CD14-positive monocyte (primary cell): ENCODE measurements at regions of chr11 and their contacts with region 1.

Region 1: DNA sequence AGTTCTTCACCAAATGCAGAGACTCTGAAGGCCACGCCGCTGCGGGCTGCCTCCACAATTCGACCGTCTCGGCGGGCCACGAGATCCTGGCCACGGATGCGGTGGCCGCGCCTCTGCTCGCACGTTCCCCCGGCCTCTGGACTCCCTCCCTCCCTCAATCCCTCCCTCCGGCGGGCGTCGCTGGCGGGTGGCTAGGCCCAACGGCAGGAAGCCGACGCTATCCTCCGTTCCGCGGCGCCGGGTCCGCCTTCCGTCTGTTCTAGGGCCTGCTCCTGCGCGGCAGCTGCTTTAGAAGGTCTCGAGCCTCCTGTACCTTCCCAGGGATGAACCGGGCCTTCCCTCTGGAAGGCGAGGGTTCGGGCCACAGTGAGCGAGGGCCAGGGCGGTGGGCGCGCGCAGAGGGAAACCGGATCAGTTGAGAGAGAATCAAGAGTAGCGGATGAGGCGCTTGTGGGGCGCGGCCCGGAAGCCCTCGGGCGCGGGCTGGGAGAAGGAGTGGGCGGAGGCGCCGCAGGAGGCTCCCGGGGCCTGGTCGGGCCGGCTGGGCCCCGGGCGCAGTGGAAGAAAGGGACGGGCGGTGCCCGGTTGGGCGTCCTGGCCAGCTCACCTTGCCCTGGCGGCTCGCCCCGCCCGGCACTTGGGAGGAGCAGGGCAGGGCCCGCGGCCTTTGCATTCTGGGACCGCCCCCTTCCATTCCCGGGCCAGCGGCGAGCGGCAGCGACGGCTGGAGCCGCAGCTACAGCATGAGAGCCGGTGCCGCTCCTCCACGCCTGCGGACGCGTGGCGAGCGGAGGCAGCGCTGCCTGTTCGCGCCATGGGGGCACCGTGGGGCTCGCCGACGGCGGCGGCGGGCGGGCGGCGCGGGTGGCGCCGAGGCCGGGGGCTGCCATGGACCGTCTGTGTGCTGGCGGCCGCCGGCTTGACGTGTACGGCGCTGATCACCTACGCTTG is at the start of gene FUT4:
- DNase-seq: peak; percentile 72 to 80 (median 77)
- H3K4me3 ChIP-seq: peak within 1 kb of the TSS; percentile 75 to 91 (median 91)
- H3K4me3 Mint-ChIP-seq: peak within 1 kb of the TSS; percentile 99 to 100
- H3K27ac ChIP-seq: peak within 1 kb of the TSS; percentile 96 to 99
- H3K27ac Mint-ChIP-seq: peak within 1 kb of the TSS; percentile 99 to 100 (median 100)
- H3K4me1 ChIP-seq: peaks cover 48 to 49% of the 10 kb centered on the region in 2 donors
- H3K4me1 Mint-ChIP-seq: peaks cover 48% of the 10 kb centered on the region
- H3K27me3 ChIP-seq: no peaks in the 10 kb centered on the region
- H3K27me3 Mint-ChIP-seq: no peaks in the 10 kb centered on the region
- CTCF ChIP-seq: no peak
- polyA plus RNA-seq, gene FUT4: 5.4 to 19.9 (median 6.5) TPM

Region 2: GRCh38 chr11:93986716-93987115 is 557.3 kb before region 1 on chr11:
- intact Hi-C with region 1: no loop called
- DNase-seq: no peak
- H3K4me3 ChIP-seq: no peak overlapping the region
- H3K4me3 Mint-ChIP-seq: no peak overlapping the region
- H3K27ac ChIP-seq: no peak overlapping the region
- H3K27ac Mint-ChIP-seq: no peak overlapping the region
- H3K4me1 ChIP-seq: no peaks in the 10 kb centered on the region
- H3K4me1 Mint-ChIP-seq: no peaks in the 10 kb centered on the region
- H3K27me3 ChIP-seq: no peaks in the 10 kb centered on the region
- H3K27me3 Mint-ChIP-seq: no peaks in the 10 kb centered on the region
- CTCF ChIP-seq: no peak

Region 3: GRCh38 chr11:94504689-94505293 is 39.2 kb before region 1 on chr11:
- intact Hi-C with region 1: no loop called
- DNase-seq: peak; percentile 33 to 58 (median 45)
- H3K4me3 ChIP-seq: no peak overlapping the region
- H3K4me3 Mint-ChIP-seq: no peak overlapping the region
- H3K27ac ChIP-seq: no peak overlapping the region
- H3K27ac Mint-ChIP-seq: no peak overlapping the region
- H3K4me1 ChIP-seq: peaks cover 3 to 8% of the 10 kb centered on the region in 2 donors
- H3K4me1 Mint-ChIP-seq: peaks cover 9% of the 10 kb centered on the region
- H3K27me3 ChIP-seq: no peaks in the 10 kb centered on the region
- H3K27me3 Mint-ChIP-seq: peaks cover 0 to 3% (median 0%) of the 10 kb centered on the region in 3 donors
- CTCF ChIP-seq: peak; percentile 82

Region 4: GRCh38 chr11:94574193-94574961 is 30.4 kb after region 1 on chr11:
- intact Hi-C with region 1: loop called in 1 of 2 experiments (anchors 2 kb)
- DNase-seq: peak; percentile 70 to 81 (median 74)
- H3K4me3 ChIP-seq: peak overlapping the region; percentile 50 to 78 (median 64)
- H3K4me3 Mint-ChIP-seq: peak overlapping the region; percentile 87 to 96
- H3K27ac ChIP-seq: peak overlapping the region; percentile 96 to 98
- H3K27ac Mint-ChIP-seq: peak overlapping the region; percentile 96 to 99 (median 99)
- H3K4me1 ChIP-seq: peaks cover 45 to 51% of the 10 kb centered on the region in 2 donors
- H3K4me1 Mint-ChIP-seq: peaks cover 60% of the 10 kb centered on the region
- H3K27me3 ChIP-seq: no peaks in the 10 kb centered on the region
- H3K27me3 Mint-ChIP-seq: peaks cover 0 to 2% (median 1%) of the 10 kb centered on the region in 3 donors
- CTCF ChIP-seq: no peak

Region 5: GRCh38 chr11:94583866-94584500 is 40.0 kb after region 1 on chr11:
- intact Hi-C with region 1: loop called in 1 of 2 experiments (anchors 5 kb)
- DNase-seq: peak; percentile 90 to 98 (median 95)
- H3K4me3 ChIP-seq: peak overlapping the region in 2 of 3 experiments; percentile 22 to 55
- H3K4me3 Mint-ChIP-seq: peak overlapping the region; percentile 44 to 76
- H3K27ac ChIP-seq: peak overlapping the region; percentile 82 to 97
- H3K27ac Mint-ChIP-seq: peak overlapping the region; percentile 95 to 99 (median 98)
- H3K4me1 ChIP-seq: peaks cover 36 to 44% of the 10 kb centered on the region in 2 donors
- H3K4me1 Mint-ChIP-seq: peaks cover 48% of the 10 kb centered on the region
- H3K27me3 ChIP-seq: no peaks in the 10 kb centered on the region
- H3K27me3 Mint-ChIP-seq: no peaks in the 10 kb centered on the region
- CTCF ChIP-seq: no peak

Region 6: GRCh38 chr11:94602430-94603372 is 58.7 kb after region 1 on chr11:
- intact Hi-C with region 1: loop called in 1 of 2 experiments (anchors 5 kb)
- DNase-seq: peak; percentile 80 to 96 (median 93)
- H3K4me3 ChIP-seq: peak overlapping the region in 2 of 3 experiments; percentile 27 to 56
- H3K4me3 Mint-ChIP-seq: peak overlapping the region; percentile 32 to 84
- H3K27ac ChIP-seq: peak overlapping the region; percentile 79 to 83
- H3K27ac Mint-ChIP-seq: peak overlapping the region; percentile 88 to 97 (median 94)
- H3K4me1 ChIP-seq: peaks cover 13 to 21% of the 10 kb centered on the region in 2 donors
- H3K4me1 Mint-ChIP-seq: peaks cover 16% of the 10 kb centered on the region
- H3K27me3 ChIP-seq: no peaks in the 10 kb centered on the region
- H3K27me3 Mint-ChIP-seq: no peaks in the 10 kb centered on the region
- CTCF ChIP-seq: no peak